CD4-positive, alpha-beta T cell (primary cell): ENCODE measurements at regions of chr15 and their contacts with region 1.

Region 1: GRCh38 chr15:79896637-79897379 is at the start of gene MTHFS:
- DNase-seq: peak; percentile 61 to 94 (median 77)
- ATAC-seq: peak; percentile 85
- H3K4me3 ChIP-seq: peak within 1 kb of the TSS; percentile 80
- H3K4me3 Mint-ChIP-seq: peak within 1 kb of the TSS; percentile 97
- H3K27ac ChIP-seq: peak within 1 kb of the TSS; percentile 93 to 95
- H3K27ac Mint-ChIP-seq: peak within 1 kb of the TSS; percentile 97
- H3K4me1 ChIP-seq: peaks cover 16% of the 10 kb centered on the region
- H3K4me1 Mint-ChIP-seq: peaks cover 42% of the 10 kb centered on the region
- H3K27me3 ChIP-seq: no peaks in the 10 kb centered on the region
- H3K27me3 Mint-ChIP-seq: no peaks in the 10 kb centered on the region
- CTCF ChIP-seq: peak; percentile 41
- total RNA-seq, gene MTHFS: 9.1 to 9.8 TPM

Region 2: GRCh38 chr15:79970624-79971434 is 74.0 kb after region 1 on chr15 and contains the start of gene BCL2A1:
- CTCF ChIA-PET with region 1: interaction called, 3 read pairs
- POLR2A ChIA-PET with region 1: interaction called, 24 read pairs
- intact Hi-C with region 1: loop called (anchors 1 to 2 kb)
- DNase-seq: peak in 13 of 14 experiments; percentile 16 to 90 (median 42)
- ATAC-seq: peak; percentile 84
- H3K4me3 ChIP-seq: peak within 1 kb of the TSS; percentile 59
- H3K4me3 Mint-ChIP-seq: peak within 1 kb of the TSS; percentile 84
- H3K27ac ChIP-seq: peak within 1 kb of the TSS; percentile 63 to 72
- H3K27ac Mint-ChIP-seq: peak within 1 kb of the TSS; percentile 91
- H3K4me1 ChIP-seq: peaks cover 26% of the 10 kb centered on the region
- H3K4me1 Mint-ChIP-seq: peaks cover 66% of the 10 kb centered on the region
- H3K27me3 ChIP-seq: no peaks in the 10 kb centered on the region
- H3K27me3 Mint-ChIP-seq: no peaks in the 10 kb centered on the region
- CTCF ChIP-seq: no peak
- total RNA-seq, gene BCL2A1: 18.7 to 20.0 TPM

Region 3: GRCh38 chr15:80152180-80152845 is 255.5 kb after region 1 on chr15:
- CTCF ChIA-PET with region 1: no interaction called
- POLR2A ChIA-PET with region 1: interaction called, 3 read pairs
- intact Hi-C with region 1: loop called in 1 of 2 experiments (anchors 5 kb)
- DNase-seq: peak; percentile 79 to 98 (median 86)
- ATAC-seq: peak; percentile 72
- H3K4me3 ChIP-seq: peak overlapping the region; percentile 89
- H3K4me3 Mint-ChIP-seq: peak overlapping the region; percentile 89
- H3K27ac ChIP-seq: peak overlapping the region in 1 of 2 donors; percentile 47
- H3K27ac Mint-ChIP-seq: peak overlapping the region; percentile 74
- H3K4me1 ChIP-seq: peaks cover 21% of the 10 kb centered on the region
- H3K4me1 Mint-ChIP-seq: peaks cover 29% of the 10 kb centered on the region
- H3K27me3 ChIP-seq: no peaks in the 10 kb centered on the region
- H3K27me3 Mint-ChIP-seq: no peaks in the 10 kb centered on the region
- CTCF ChIP-seq: no peak